Endothelial cell of umbilical vein (primary cell): ENCODE measurements at regions of chr3 and their contacts with region 1.

Region 1: DNA sequence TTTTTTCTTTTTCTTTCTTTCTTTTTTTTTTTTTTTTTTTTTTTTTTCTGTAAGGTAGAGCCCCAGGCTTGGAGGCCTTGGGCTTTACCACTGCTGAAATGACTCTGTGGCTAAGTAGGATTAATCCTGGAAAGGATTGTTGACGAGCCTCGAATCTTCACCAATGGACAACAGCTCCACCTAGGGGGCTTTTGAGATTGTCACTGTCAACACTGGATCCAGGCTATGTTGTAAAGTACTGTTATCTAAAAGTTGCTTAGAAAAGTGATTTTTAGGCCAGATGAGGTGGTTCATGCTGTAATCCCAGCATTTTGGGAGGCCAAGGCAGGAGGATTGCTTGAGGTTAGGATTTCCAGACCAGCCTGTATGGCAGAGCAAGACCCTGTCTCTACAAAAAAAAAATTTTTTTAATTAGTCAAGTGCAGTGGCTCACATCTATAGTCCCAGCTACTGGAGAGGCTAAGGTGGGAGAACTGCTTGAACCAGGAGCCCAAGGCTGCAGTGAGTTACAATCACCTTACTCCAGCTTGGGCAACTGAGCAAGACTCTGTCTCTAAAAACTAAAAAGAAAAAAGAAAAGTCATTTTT is 41.6 kb downstream of the KLHL18 start:
- DNase-seq: peak; percentile 77
- H3K4me3 ChIP-seq: no peak overlapping the region
- H3K27ac ChIP-seq: no peak overlapping the region
- H3K4me1 ChIP-seq: no peaks in the 10 kb centered on the region
- H3K27me3 ChIP-seq: no peaks in the 10 kb centered on the region
- CTCF ChIP-seq: peak; percentile 60 to 72
- POLR2A ChIP-seq: no peak

Region 2: GRCh38 chr3:47113669-47114365 is 210.6 kb before region 1 on chr3:
- CTCF ChIA-PET with region 1: interaction called, 9 read pairs
- POLR2A ChIA-PET with region 1: no interaction called
- dilution Hi-C with region 1: no loop called
- intact Hi-C with region 1: loop called (anchors 5 kb)
- DNase-seq: no peak
- H3K4me3 ChIP-seq: no peak overlapping the region
- H3K27ac ChIP-seq: no peak overlapping the region
- H3K4me1 ChIP-seq: peaks cover 7% of the 10 kb centered on the region
- H3K27me3 ChIP-seq: no peaks in the 10 kb centered on the region
- CTCF ChIP-seq: no peak
- POLR2A ChIP-seq: no peak

Region 3: GRCh38 chr3:47186285-47186684 is 138.1 kb before region 1 on chr3:
- CTCF ChIA-PET with region 1: no interaction called
- POLR2A ChIA-PET with region 1: no interaction called
- dilution Hi-C with region 1: no loop called
- intact Hi-C with region 1: no loop called
- DNase-seq: no peak
- H3K4me3 ChIP-seq: no peak overlapping the region
- H3K27ac ChIP-seq: no peak overlapping the region
- H3K4me1 ChIP-seq: no peaks in the 10 kb centered on the region
- H3K27me3 ChIP-seq: no peaks in the 10 kb centered on the region
- CTCF ChIP-seq: no peak
- POLR2A ChIP-seq: no peak

Region 4: GRCh38 chr3:47250309-47251060 is 73.9 kb before region 1 on chr3:
- CTCF ChIA-PET with region 1: interaction called, 37 read pairs
- POLR2A ChIA-PET with region 1: no interaction called
- dilution Hi-C with region 1: no loop called
- intact Hi-C with region 1: loop called (anchors 1 kb)
- DNase-seq: peak; percentile 43
- H3K4me3 ChIP-seq: no peak overlapping the region
- H3K27ac ChIP-seq: no peak overlapping the region
- H3K4me1 ChIP-seq: no peaks in the 10 kb centered on the region
- H3K27me3 ChIP-seq: no peaks in the 10 kb centered on the region
- CTCF ChIP-seq: peak; percentile 37 to 56
- POLR2A ChIP-seq: no peak

Region 5: DNA sequence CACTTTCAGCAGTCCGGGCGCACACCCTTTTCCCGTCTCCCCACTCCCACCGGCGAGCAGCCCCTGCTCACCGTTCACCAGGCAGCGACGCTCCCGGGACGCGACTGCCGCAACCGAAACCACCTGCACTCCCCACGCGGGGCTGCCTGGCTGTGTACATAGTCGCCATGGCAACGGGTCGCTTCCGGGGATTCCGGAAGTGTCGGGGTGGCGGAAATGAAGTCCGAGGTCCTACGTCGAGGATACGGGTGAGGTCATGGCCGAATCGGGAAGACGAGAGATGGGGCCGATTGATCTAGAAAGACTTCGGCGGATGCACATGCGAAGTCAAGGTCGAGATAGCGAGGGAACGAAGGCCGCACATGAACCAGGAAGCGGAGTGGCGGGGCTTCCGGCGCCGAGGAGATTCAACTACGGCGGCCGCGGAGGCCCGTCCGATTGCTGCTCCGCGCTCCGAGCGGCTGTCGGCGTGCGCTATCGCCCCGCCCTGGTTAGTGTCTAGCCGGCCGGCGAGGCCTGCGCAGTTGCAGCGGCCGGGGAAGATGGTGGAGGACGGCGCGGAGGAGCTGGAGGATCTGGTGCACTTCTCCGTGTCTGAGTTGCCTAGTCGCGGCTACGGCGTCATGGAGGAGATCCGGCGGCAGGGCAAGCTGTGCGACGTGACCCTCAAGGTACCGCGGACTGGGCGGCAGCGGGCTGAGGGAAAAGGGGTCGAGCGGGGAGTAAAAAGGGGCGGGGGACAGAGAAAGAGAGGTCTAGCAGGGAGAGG is 41.8 kb before region 1 on chr3 and contains the starts of genes KIF9 and KLHL18:
- CTCF ChIA-PET with region 1: interaction called, 9 read pairs
- POLR2A ChIA-PET with region 1: no interaction called
- dilution Hi-C with region 1: no loop called
- intact Hi-C with region 1: loop called (anchors 1 kb)
- DNase-seq: peak; percentile 91
- H3K4me3 ChIP-seq: peak within 1 kb of the TSS; percentile 63 to 93 (median 82)
- H3K27ac ChIP-seq: peak within 1 kb of the TSS; percentile 80
- H3K4me1 ChIP-seq: peaks cover 7% of the 10 kb centered on the region
- H3K27me3 ChIP-seq: no peaks in the 10 kb centered on the region
- CTCF ChIP-seq: no peak
- POLR2A ChIP-seq: peak; percentile 91
- total RNA-seq, gene KIF9: 20.7 and 22.4 TPM in 2 replicates
- total RNA-seq, gene KLHL18: 43.4 and 47.2 TPM in 2 replicates

Region 6: GRCh38 chr3:47522082-47522987 is 198.0 kb after region 1 on chr3:
- CTCF ChIA-PET with region 1: no interaction called
- POLR2A ChIA-PET with region 1: no interaction called
- dilution Hi-C with region 1: no loop called
- intact Hi-C with region 1: no loop called
- DNase-seq: peak; percentile 86
- H3K4me3 ChIP-seq: no peak overlapping the region
- H3K27ac ChIP-seq: no peak overlapping the region
- H3K4me1 ChIP-seq: no peaks in the 10 kb centered on the region
- H3K27me3 ChIP-seq: no peaks in the 10 kb centered on the region
- CTCF ChIP-seq: peak; percentile 85 to 90
- POLR2A ChIP-seq: no peak